ENCODE measurements at regions of chr2 and their contacts with region 1.

Region 1: GRCh38 chr2:241702132-241703031 is 543 bp downstream of the ING5 start:
- DNase-seq: peak; percentile 81 to 97
- H3K4me3 ChIP-seq: peak overlapping the region; percentile 99
- H3K27ac ChIP-seq: peak overlapping the region; percentile 89; the same call in 1 of the 2 replicates
- H3K4me1 ChIP-seq: peaks cover 18% of the 10 kb centered on the region
- H3K27me3 ChIP-seq: no peaks in the 10 kb centered on the region
- CTCF ChIP-seq: peak; percentile 66

Region 2: GRCh38 chr2:241315093-241315878 is 387.1 kb before region 1 on chr2 and contains the start of gene HDLBP:
- CTCF ChIA-PET with region 1: no interaction called
- POLR2A ChIA-PET with region 1: interaction called, 5 read pairs
- intact Hi-C with region 1: loop called (anchors 1 kb)
- DNase-seq: peak; percentile 95 to 100
- H3K4me3 ChIP-seq: peak within 1 kb of the TSS; percentile 95
- H3K27ac ChIP-seq: peak within 1 kb of the TSS; percentile 96
- H3K4me1 ChIP-seq: peaks cover 39% of the 10 kb centered on the region
- H3K27me3 ChIP-seq: no peaks in the 10 kb centered on the region
- CTCF ChIP-seq: no peak
- total RNA-seq, gene HDLBP: 715 and 908 TPM in 2 replicates

Region 3: DNA sequence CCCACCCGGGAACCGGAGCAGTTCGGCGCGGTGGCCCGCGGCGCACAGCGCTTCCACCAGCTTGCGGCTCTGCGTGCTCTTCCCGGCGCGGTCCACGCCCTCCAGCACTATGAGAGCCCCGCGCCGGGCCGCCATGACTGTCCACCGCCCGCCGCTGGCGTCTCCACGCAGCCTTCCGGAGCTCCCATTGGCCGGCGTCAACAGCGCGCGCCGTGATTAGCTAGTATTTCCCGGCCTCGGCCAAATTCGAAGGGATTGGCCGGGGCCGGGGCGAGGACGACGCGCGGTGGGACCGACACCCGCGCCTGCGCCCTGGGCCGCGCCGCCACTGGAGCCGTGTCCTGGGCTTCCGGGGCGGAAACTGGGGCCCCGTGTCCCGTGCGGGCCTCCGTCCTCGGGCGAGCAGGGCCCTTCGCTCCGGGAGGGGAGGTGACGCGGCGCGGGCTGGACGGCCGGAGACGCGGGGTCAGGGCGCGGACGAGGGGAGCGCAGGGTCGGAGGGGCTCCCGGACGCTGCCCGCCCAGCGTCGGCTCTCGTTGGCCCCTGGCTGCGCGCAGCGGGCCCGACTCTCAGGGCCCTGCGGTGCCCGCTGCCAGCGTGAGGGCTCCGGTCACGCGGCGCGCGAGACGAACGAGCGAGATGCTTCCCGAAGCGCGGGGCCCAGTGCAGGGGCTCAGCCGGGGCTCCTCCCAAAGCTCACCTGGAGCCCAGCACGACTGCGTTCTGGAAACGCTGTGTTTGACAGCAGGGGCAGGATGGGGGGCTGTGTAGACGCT is 15.5 kb before region 1 on chr2 and contains the start of gene DTYMK:
- CTCF ChIA-PET with region 1: interaction called, 6 read pairs
- POLR2A ChIA-PET with region 1: interaction called, 62 read pairs
- intact Hi-C with region 1: loop called (anchors 1 kb)
- DNase-seq: peak; percentile 93 to 100
- H3K4me3 ChIP-seq: peak within 1 kb of the TSS; percentile 95
- H3K27ac ChIP-seq: peak within 1 kb of the TSS; percentile 72
- H3K4me1 ChIP-seq: peaks cover 13% of the 10 kb centered on the region
- H3K27me3 ChIP-seq: no peaks in the 10 kb centered on the region
- CTCF ChIP-seq: no peak
- total RNA-seq, gene DTYMK: 183 and 191 TPM in 2 replicates

Region 4: GRCh38 chr2:241734467-241735208 is 32.3 kb after region 1 on chr2 and contains the start of gene D2HGDH:
- CTCF ChIA-PET with region 1: no interaction called
- POLR2A ChIA-PET with region 1: interaction called, 13 read pairs
- intact Hi-C with region 1: loop called (anchors 1 kb)
- DNase-seq: peak; percentile 65 to 98
- H3K4me3 ChIP-seq: peak within 1 kb of the TSS; percentile 85
- H3K27ac ChIP-seq: peak within 1 kb of the TSS; percentile 36
- H3K4me1 ChIP-seq: peaks cover 16% of the 10 kb centered on the region
- H3K27me3 ChIP-seq: no peaks in the 10 kb centered on the region
- CTCF ChIP-seq: no peak
- total RNA-seq, gene D2HGDH: 131 and 232 TPM in 2 replicates

Region 5: GRCh38 chr2:242088471-242089212 is 386.3 kb after region 1 on chr2:
- CTCF ChIA-PET with region 1: no interaction called
- POLR2A ChIA-PET with region 1: no interaction called
- intact Hi-C with region 1: loop called (anchors 2 kb)
- DNase-seq: peak; percentile 86 to 99
- H3K4me3 ChIP-seq: peak overlapping the region; percentile 96
- H3K27ac ChIP-seq: no peak overlapping the region
- H3K4me1 ChIP-seq: peaks cover 18% of the 10 kb centered on the region
- H3K27me3 ChIP-seq: no peaks in the 10 kb centered on the region
- CTCF ChIP-seq: no peak